ENCODE measurements at regions of chr9 and their contacts with region 1.

Region 1: GRCh38 chr9:129139993-129140396 is 28.8 kb downstream of the PTPA start:
- DNase-seq: peak; percentile 96 to 99
- H3K4me3 ChIP-seq: peak overlapping the region; percentile 47 to 53
- H3K27ac ChIP-seq: peak overlapping the region; percentile 100
- H3K4me1 ChIP-seq: peaks cover 78% of the 10 kb centered on the region
- H3K27me3 ChIP-seq: no peaks in the 10 kb centered on the region
- CTCF ChIP-seq: no peak
- POLR2A ChIP-seq: peak in 1 of 2 donors; percentile 35

Region 2: GRCh38 chr9:129177791-129178559 is 38.0 kb after region 1 on chr9 and contains the start of gene IER5L:
- intact Hi-C with region 1: loop called (anchors 2 kb)
- DNase-seq: peak in 1 of 2 donors; percentile 97
- H3K4me3 ChIP-seq: peak within 1 kb of the TSS; percentile 77 to 99
- H3K27ac ChIP-seq: peak within 1 kb of the TSS; percentile 99
- H3K4me1 ChIP-seq: peaks cover 29% of the 10 kb centered on the region
- H3K27me3 ChIP-seq: no peaks in the 10 kb centered on the region
- CTCF ChIP-seq: no peak
- POLR2A ChIP-seq: peak in 1 of 2 donors; percentile 97
- total RNA-seq, gene IER5L: 34.4 TPM

Region 3: DNA sequence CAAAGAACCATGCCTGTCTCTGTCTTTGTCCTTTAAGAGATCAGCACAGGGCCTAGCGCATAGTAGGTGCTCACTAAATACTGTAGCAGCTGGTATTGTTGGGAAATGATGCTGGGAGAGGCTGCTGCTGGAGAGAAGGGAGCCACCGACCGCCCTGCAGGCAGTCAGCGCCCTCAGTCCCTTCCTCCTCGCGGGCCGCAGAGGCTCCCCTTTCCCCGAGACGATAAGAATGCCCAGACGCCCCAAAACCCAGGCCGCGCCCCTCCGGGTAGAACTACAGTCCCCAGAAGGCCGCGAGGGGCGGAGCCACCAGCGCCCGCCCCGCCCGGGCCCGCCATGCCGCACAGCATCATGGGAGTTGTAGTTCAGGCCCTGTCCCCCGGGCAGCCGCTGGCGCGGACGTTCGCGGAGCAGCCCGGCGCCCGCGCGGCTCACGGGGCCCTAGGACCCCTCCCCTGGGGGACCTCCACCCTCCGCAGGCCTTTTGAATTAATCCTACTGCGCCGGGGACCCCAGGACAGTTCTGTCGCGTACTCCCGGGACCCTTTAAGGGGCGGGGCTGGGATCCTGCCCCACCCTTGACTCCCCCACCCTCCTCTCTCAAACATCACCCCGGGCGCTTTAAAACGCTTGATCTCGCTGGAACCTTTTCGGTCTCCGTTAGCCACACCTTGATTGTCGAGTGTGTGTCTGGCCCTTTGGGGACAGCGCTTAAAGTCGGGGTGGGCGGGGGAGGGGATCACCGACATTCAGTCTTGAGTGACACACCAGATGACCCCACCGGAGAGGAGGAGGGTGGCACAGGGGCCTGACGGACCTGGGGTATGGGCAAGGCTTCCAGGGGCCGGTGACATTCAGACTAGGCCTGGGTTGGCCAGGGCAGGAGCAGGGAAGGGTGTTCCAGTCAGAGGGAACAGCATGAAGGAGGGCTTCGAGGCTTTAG is 62.9 kb after region 1 on chr9:
- intact Hi-C with region 1: no loop called
- DNase-seq: no peak
- H3K4me3 ChIP-seq: peak overlapping the region; percentile 60 to 86
- H3K27ac ChIP-seq: peak overlapping the region; percentile 93
- H3K4me1 ChIP-seq: peaks cover 20% of the 10 kb centered on the region
- H3K27me3 ChIP-seq: no peaks in the 10 kb centered on the region
- CTCF ChIP-seq: no peak
- POLR2A ChIP-seq: peak in 1 of 2 donors; percentile 66

Region 4: GRCh38 chr9:129317179-129318011 is 177.4 kb after region 1 on chr9:
- intact Hi-C with region 1: loop called (anchors 5 kb)
- DNase-seq: peak in 1 of 2 donors; percentile 85
- H3K4me3 ChIP-seq: no peak overlapping the region
- H3K27ac ChIP-seq: peak overlapping the region; percentile 96
- H3K4me1 ChIP-seq: peaks cover 73% of the 10 kb centered on the region
- H3K27me3 ChIP-seq: no peaks in the 10 kb centered on the region
- CTCF ChIP-seq: no peak
- POLR2A ChIP-seq: no peak

Region 5: DNA sequence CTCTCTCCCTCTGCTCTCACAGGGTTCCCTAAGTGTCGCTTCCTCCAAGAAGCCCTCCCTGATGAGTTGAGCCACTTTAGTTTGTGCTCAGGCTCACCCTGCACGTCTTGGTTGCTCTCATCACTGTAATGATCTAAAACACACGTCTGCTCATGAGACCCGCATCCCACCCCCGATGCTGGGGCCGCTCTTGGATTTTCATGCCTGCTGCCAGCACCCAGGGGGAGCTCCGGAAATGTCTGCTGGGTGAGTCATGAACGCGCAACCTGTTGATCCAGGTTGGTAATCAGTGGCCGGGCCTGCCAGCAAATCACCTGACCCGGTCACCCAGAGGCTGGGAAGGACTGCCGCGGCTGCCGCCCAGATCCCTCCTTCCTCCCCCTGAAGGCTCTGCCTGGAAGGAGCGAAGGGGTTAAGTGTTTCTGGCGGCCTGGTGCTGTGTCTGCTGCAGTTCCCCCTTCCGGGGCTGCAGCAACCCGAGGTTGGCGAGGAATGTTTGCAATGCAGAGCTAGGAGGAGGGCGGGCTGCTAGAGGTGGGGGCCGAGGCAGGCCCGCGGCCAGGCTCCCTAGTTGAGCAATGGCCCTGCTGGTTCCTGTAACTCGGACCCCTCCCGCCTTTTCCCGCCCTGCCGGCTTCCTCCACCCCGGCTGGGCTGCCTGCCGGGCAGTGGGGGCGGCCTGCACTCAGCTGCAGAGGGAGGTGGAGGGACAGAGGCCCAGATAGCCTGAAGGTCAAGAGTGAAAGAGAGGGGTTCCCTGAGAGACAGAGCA is 194.1 kb after region 1 on chr9:
- intact Hi-C with region 1: loop called (anchors 5 kb)
- DNase-seq: peak in 1 of 2 donors; percentile 97
- H3K4me3 ChIP-seq: peak overlapping the region; percentile 23 to 31
- H3K27ac ChIP-seq: peak overlapping the region; percentile 92
- H3K4me1 ChIP-seq: peaks cover 70% of the 10 kb centered on the region
- H3K27me3 ChIP-seq: no peaks in the 10 kb centered on the region
- CTCF ChIP-seq: no peak
- POLR2A ChIP-seq: no peak

Region 6: GRCh38 chr9:129569502-129570449 is 429.8 kb after region 1 on chr9:
- intact Hi-C with region 1: loop called (anchors 10 kb)
- DNase-seq: no peak
- H3K4me3 ChIP-seq: peak overlapping the region; percentile 52 to 56
- H3K27ac ChIP-seq: peak overlapping the region; percentile 94
- H3K4me1 ChIP-seq: peaks cover 38% of the 10 kb centered on the region
- H3K27me3 ChIP-seq: no peaks in the 10 kb centered on the region
- CTCF ChIP-seq: peak in 1 of 3 experiments; percentile 40
- POLR2A ChIP-seq: no peak